T-cell (primary cell): ENCODE measurements at regions of chr21 and their contacts with region 1.

Region 1: DNA sequence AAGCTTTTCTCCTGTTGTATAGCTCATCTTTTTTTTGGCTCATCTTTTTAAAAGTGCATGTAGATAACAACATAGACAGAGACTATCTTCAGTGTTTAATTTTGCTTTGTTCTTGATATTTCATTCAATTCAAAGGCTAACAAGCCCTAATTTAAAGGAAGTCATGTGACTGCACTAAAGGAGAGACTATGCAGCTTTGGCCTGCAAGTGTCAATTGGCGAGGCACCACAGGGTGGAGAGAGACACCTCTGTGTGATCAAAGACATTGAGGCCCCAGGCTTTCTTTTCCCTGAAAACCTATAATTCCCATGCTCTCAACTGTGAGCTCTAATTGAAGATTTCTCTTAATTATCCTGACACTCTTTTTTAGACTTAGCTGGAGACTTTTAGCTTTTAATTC is 53.6 kb downstream of the CHODL start:
- DNase-seq: no peak
- ATAC-seq: no peak
- H3K4me3 ChIP-seq: no peak overlapping the region
- H3K4me3 Mint-ChIP-seq: no peak overlapping the region
- H3K27ac ChIP-seq: no peak overlapping the region
- H3K27ac Mint-ChIP-seq: no peak overlapping the region
- H3K4me1 ChIP-seq: no peaks in the 10 kb centered on the region
- H3K4me1 Mint-ChIP-seq: peaks cover 0 to 5% (median 3%) of the 10 kb centered on the region in 3 donors
- H3K27me3 ChIP-seq: no peaks in the 10 kb centered on the region
- H3K27me3 Mint-ChIP-seq: no peaks in the 10 kb centered on the region

Region 2: DNA sequence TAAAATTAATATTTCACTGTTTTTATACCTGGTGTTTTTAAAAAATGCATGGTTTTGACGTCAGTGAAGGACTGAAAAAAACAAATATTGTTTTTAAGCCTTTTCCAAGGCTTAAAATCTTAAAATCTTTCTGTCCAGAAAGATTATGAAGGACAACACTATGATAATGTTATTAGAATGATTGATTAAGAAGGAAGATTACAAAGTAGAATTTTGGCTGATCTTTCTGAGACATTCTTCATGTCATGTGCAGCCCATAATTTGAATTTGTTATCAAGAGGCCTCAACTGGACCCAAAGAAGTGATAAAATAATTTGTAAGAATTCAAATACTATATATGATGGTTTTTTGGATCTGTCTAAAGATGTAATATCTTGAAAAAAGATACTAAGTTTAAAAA is 1369.8 kb before region 1 on chr21:
- CTCF ChIA-PET with region 1: interaction called in 1 of 2 experiments, 12 read pairs
- POLR2A ChIA-PET with region 1: no interaction called
- DNase-seq: no peak
- ATAC-seq: no peak
- H3K4me3 ChIP-seq: no peak overlapping the region
- H3K4me3 Mint-ChIP-seq: no peak overlapping the region
- H3K27ac ChIP-seq: no peak overlapping the region
- H3K27ac Mint-ChIP-seq: no peak overlapping the region
- H3K4me1 ChIP-seq: no peaks in the 10 kb centered on the region
- H3K4me1 Mint-ChIP-seq: no peaks in the 10 kb centered on the region
- H3K27me3 ChIP-seq: no peaks in the 10 kb centered on the region
- H3K27me3 Mint-ChIP-seq: no peaks in the 10 kb centered on the region